Mammary epithelial cell (primary cell): ENCODE measurements at regions of chr3 and their contacts with region 1.

Region 1: GRCh38 chr3:190384241-190384863 is 3.6 kb upstream of the CLDN16 start:
- DNase-seq: peak; percentile 90
- H3K4me3 ChIP-seq: no peak overlapping the region
- H3K27ac ChIP-seq: peak overlapping the region; percentile 28
- H3K4me1 ChIP-seq: peaks cover 52% of the 10 kb centered on the region
- H3K27me3 ChIP-seq: no peaks in the 10 kb centered on the region
- CTCF ChIP-seq: peak; percentile 90 to 98

Region 2: DNA sequence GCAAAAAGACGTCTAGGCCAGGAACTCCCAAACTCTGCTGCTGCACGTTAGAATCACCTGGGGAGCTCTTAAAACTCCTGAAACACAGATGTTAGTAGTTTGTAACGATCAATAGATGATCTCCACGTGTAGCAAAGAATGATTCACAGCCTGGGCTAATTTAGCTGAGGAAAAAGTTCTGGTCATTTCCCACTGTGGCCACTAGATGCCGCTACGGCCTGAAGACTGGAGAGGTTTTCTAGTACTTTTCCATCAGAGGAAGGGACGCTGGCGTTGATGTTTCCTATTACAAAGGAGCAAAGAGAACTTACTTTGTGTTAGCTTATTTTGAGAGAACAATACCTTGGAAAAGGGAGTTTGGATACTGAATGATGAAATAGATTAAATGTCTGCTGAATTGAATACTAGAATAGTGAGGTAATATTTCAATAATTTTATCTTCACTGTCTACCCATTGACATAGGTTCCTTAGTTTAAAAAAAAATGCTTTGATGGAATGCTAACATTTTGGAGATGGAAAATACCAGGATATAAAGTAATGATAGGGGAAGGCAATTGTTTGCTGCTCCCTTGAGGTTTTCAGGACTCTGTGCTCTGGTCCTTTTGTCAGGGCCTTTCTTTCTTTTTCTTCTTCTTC is 422.7 kb before region 1 on chr3:
- CTCF ChIA-PET with region 1: no interaction called
- dilution Hi-C with region 1: loop called (anchors 5 kb)
- in situ Hi-C with region 1: no loop called
- intact Hi-C with region 1: loop called (anchors 1 kb)
- DNase-seq: peak; percentile 82
- H3K4me3 ChIP-seq: no peak overlapping the region
- H3K27ac ChIP-seq: peak overlapping the region; percentile 2
- H3K4me1 ChIP-seq: peaks cover 18% of the 10 kb centered on the region
- H3K27me3 ChIP-seq: no peaks in the 10 kb centered on the region
- CTCF ChIP-seq: peak; percentile 90 to 97

Region 3: GRCh38 chr3:190120269-190121060 is 263.9 kb before region 1 on chr3 and contains the start of gene P3H2:
- CTCF ChIA-PET with region 1: no interaction called
- dilution Hi-C with region 1: no loop called
- in situ Hi-C with region 1: no loop called
- intact Hi-C with region 1: loop called (anchors 5 kb)
- DNase-seq: peak; percentile 92
- H3K4me3 ChIP-seq: peak within 1 kb of the TSS; percentile 85 to 90 (median 90)
- H3K27ac ChIP-seq: peak within 1 kb of the TSS; percentile 93
- H3K4me1 ChIP-seq: peaks cover 50% of the 10 kb centered on the region
- H3K27me3 ChIP-seq: no peaks in the 10 kb centered on the region
- CTCF ChIP-seq: peak; percentile 14 to 58
- total RNA-seq, gene P3H2: 71.2 to 181 TPM

Region 4: GRCh38 chr3:190339130-190339529 is 45.2 kb before region 1 on chr3:
- CTCF ChIA-PET with region 1: interaction called, 5 read pairs
- dilution Hi-C with region 1: no loop called
- in situ Hi-C with region 1: no loop called
- intact Hi-C with region 1: loop called (anchors 1 kb)
- DNase-seq: peak; percentile 78
- H3K4me3 ChIP-seq: no peak overlapping the region
- H3K27ac ChIP-seq: peak overlapping the region; percentile 77
- H3K4me1 ChIP-seq: peaks cover 33% of the 10 kb centered on the region
- H3K27me3 ChIP-seq: no peaks in the 10 kb centered on the region
- CTCF ChIP-seq: peak; percentile 26 to 43

Region 5: GRCh38 chr3:190424478-190425439 is 40.4 kb after region 1 on chr3:
- CTCF ChIA-PET with region 1: interaction called, 9 read pairs
- dilution Hi-C with region 1: no loop called
- in situ Hi-C with region 1: no loop called
- intact Hi-C with region 1: loop called (anchors 1 kb)
- DNase-seq: peak; percentile 73
- H3K4me3 ChIP-seq: no peak overlapping the region
- H3K27ac ChIP-seq: no peak overlapping the region
- H3K4me1 ChIP-seq: peaks cover 5% of the 10 kb centered on the region
- H3K27me3 ChIP-seq: no peaks in the 10 kb centered on the region
- CTCF ChIP-seq: peak; percentile 44 to 64

Region 6: GRCh38 chr3:190458040-190458439 is 73.7 kb after region 1 on chr3:
- CTCF ChIA-PET with region 1: no interaction called
- dilution Hi-C with region 1: no loop called
- in situ Hi-C with region 1: no loop called
- intact Hi-C with region 1: no loop called
- DNase-seq: peak; percentile 18
- H3K4me3 ChIP-seq: no peak overlapping the region
- H3K27ac ChIP-seq: no peak overlapping the region
- H3K4me1 ChIP-seq: peaks cover 4% of the 10 kb centered on the region
- H3K27me3 ChIP-seq: no peaks in the 10 kb centered on the region
- CTCF ChIP-seq: no peak

Region 7: GRCh38 chr3:190617185-190617584 is 232.8 kb after region 1 on chr3:
- CTCF ChIA-PET with region 1: no interaction called
- dilution Hi-C with region 1: no loop called
- in situ Hi-C with region 1: no loop called
- intact Hi-C with region 1: no loop called
- DNase-seq: no peak
- H3K4me3 ChIP-seq: no peak overlapping the region
- H3K27ac ChIP-seq: peak overlapping the region; percentile 46
- H3K4me1 ChIP-seq: no peaks in the 10 kb centered on the region
- H3K27me3 ChIP-seq: no peaks in the 10 kb centered on the region
- CTCF ChIP-seq: no peak

Region 8: GRCh38 chr3:190701096-190701532 is 316.8 kb after region 1 on chr3:
- CTCF ChIA-PET with region 1: interaction called, 3 read pairs
- dilution Hi-C with region 1: no loop called
- in situ Hi-C with region 1: no loop called
- intact Hi-C with region 1: loop called (anchors 1 kb)
- DNase-seq: peak; percentile 67
- H3K4me3 ChIP-seq: no peak overlapping the region
- H3K27ac ChIP-seq: no peak overlapping the region
- H3K4me1 ChIP-seq: peaks cover 8% of the 10 kb centered on the region
- H3K27me3 ChIP-seq: no peaks in the 10 kb centered on the region
- CTCF ChIP-seq: peak; percentile 72 to 85